ENCODE measurements at regions of chr9 and their contacts with region 1.

Region 1: GRCh38 chr9:94681508-94681907 is 42.2 kb upstream of the FBP1 start:
- DNase-seq: peak; percentile 77
- H3K4me3 ChIP-seq: no peak overlapping the region
- H3K27ac ChIP-seq: no peak overlapping the region
- H3K4me1 ChIP-seq: no peaks in the 10 kb centered on the region
- H3K27me3 ChIP-seq: no peaks in the 10 kb centered on the region
- CTCF ChIP-seq: peak; percentile 81

Region 2: GRCh38 chr9:94490465-94490864 is 191.0 kb before region 1 on chr9:
- CTCF ChIA-PET with region 1: no interaction called
- POLR2A ChIA-PET with region 1: no interaction called
- intact Hi-C with region 1: no loop called
- DNase-seq: no peak
- H3K4me3 ChIP-seq: no peak overlapping the region
- H3K27ac ChIP-seq: no peak overlapping the region
- H3K4me1 ChIP-seq: no peaks in the 10 kb centered on the region
- H3K27me3 ChIP-seq: peaks cover 6% of the 10 kb centered on the region
- CTCF ChIP-seq: no peak

Region 3: GRCh38 chr9:94875300-94876020 is 194.0 kb after region 1 on chr9:
- CTCF ChIA-PET with region 1: no interaction called
- POLR2A ChIA-PET with region 1: no interaction called
- intact Hi-C with region 1: no loop called
- DNase-seq: no peak
- H3K4me3 ChIP-seq: no peak overlapping the region
- H3K27ac ChIP-seq: no peak overlapping the region
- H3K4me1 ChIP-seq: peaks cover 12% of the 10 kb centered on the region
- H3K27me3 ChIP-seq: no peaks in the 10 kb centered on the region
- CTCF ChIP-seq: no peak

Region 4: GRCh38 chr9:95167998-95168397 is 486.5 kb after region 1 on chr9:
- CTCF ChIA-PET with region 1: interaction called, 10 read pairs
- POLR2A ChIA-PET with region 1: no interaction called
- intact Hi-C with region 1: no loop called
- DNase-seq: peak; percentile 89
- H3K4me3 ChIP-seq: no peak overlapping the region
- H3K27ac ChIP-seq: no peak overlapping the region
- H3K4me1 ChIP-seq: peaks cover 24% of the 10 kb centered on the region
- H3K27me3 ChIP-seq: no peaks in the 10 kb centered on the region
- CTCF ChIP-seq: peak; percentile 80

Measured in A673 (cell line).